ENCODE measurements at regions of chr15 and their contacts with region 1.

Region 1: DNA sequence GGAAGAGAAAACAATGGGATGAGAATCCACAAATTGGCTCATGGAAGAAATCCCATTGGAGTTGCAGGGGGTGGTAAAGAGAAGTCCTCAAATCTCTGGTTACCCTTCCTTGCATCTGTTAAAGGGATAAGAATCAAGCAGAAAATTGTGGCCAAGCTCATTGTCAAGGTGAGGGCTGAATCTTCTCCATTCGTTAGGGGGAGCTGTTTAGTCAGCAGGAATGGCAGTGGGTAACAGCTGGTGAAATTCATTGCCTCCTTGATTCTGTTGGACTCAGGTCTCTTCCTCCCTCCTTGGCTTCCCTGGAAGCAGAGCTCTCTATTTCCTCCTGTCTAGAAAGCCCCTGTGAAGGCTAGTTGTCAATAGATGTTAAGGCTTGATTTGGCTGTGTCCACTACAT is 343.1 kb upstream of the SEMA6D start:
- DNase-seq: peak; percentile 31
- H3K4me3 Mint-ChIP-seq: no peak overlapping the region
- H3K27ac Mint-ChIP-seq: no peak overlapping the region
- H3K4me1 Mint-ChIP-seq: no peaks in the 10 kb centered on the region
- H3K27me3 Mint-ChIP-seq: no peaks in the 10 kb centered on the region
- CTCF ChIP-seq: peak; percentile 30

Region 2: DNA sequence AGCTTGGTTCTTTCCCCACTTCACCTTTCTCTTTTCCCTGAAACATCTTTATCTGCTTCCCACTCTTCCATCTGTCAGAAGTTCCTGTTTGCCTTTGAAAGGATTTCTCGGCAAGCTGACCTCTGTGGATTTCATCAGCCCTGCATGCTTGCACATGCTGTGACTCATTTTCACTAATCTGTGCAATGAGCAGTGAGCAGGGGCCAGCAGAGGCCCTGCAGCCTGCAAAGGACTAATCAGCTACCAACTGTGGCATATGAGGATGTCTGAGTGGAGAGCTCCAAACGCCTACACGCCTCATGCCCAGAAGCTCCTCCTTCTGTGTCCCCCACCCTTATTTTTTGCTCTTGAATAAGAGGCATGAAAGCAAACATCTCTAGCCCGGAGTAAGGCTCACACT is 10.1 kb after region 1 on chr15:
- CTCF ChIA-PET with region 1: interaction called, 4 read pairs
- POLR2A ChIA-PET with region 1: interaction called, 10 read pairs
- intact Hi-C with region 1: no loop called
- DNase-seq: peak; percentile 78
- H3K4me3 Mint-ChIP-seq: no peak overlapping the region
- H3K27ac Mint-ChIP-seq: peak overlapping the region; percentile 54
- H3K4me1 Mint-ChIP-seq: peaks cover 27% of the 10 kb centered on the region
- H3K27me3 Mint-ChIP-seq: no peaks in the 10 kb centered on the region
- CTCF ChIP-seq: no peak

Region 3: GRCh38 chr15:47689660-47690059 is 315.4 kb after region 1 on chr15:
- CTCF ChIA-PET with region 1: no interaction called
- POLR2A ChIA-PET with region 1: no interaction called
- intact Hi-C with region 1: loop called (anchors 10 kb)
- DNase-seq: no peak
- H3K4me3 Mint-ChIP-seq: no peak overlapping the region
- H3K27ac Mint-ChIP-seq: no peak overlapping the region
- H3K4me1 Mint-ChIP-seq: peaks cover 18% of the 10 kb centered on the region
- H3K27me3 Mint-ChIP-seq: no peaks in the 10 kb centered on the region
- CTCF ChIP-seq: no peak